ENCODE measurements at regions of chr7 and their contacts with region 1.

Region 1: DNA sequence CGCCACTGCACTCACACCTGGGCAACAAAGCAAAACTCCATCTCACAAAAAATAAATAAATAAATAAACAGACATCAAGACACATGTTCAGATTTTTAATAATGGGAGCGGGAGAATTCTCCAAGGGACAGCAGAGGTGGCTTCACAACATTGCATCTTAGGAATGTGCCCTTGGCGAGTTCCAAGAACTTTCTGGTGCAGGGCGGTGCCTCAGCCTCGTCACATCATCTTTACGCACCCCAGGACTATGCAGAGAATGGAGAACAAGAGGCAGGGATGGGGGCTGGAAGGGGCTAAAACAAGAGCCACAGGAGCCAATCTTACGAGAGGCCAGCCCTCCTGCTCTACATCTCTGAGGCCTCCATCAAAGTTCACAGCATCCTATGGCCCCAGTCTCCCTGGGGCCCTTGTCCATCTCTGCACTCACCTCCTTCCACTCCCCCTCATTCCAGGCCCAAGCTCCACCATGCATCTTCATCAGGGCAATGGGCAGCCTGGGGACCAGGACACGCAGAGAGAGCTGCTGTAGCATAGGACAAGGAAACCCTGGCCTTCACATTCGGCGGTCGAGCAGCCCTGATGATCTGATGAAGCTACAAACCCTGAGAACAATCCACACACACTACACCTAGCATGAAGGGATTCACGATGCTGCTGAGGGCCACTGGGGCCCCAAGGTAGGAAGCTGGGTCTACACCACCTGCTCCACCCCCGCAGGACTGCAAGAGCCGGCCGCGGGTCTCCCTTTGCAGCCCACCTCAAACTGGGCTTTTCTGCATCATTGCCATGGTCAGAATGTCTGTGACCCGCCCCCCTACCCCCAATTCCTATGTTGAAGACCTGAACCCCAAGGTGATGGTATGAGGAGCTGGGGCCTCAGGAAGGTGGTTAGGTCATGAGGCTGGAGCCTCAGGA is 22.3 kb downstream of the TNS3 start:
- DNase-seq: no peak
- H3K4me3 ChIP-seq: no peak overlapping the region
- H3K27ac ChIP-seq: no peak overlapping the region
- H3K4me1 ChIP-seq: no peaks in the 10 kb centered on the region
- CTCF ChIP-seq: no peak

Region 2: DNA sequence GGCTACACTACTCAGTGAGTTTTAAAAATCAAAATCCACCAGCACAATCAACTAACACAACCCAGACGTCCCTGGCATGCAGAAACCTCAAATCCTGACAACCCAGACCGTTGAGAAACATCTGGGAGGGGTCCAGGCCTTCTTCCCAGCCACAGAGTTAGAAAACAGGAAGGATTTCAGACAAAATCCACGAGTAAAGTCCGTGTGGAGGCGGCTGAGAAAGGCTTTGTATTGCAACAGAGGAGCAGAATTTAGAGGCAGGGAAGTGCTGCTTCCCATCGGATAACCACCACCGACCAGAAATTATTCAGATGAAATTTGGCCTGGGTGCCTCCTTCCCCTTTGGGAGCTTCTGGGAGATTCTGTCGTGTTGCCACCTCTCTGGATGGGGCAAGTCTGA is 39.2 kb before region 1 on chr7:
- CTCF ChIA-PET with region 1: interaction called, 17 read pairs
- POLR2A ChIA-PET with region 1: no interaction called
- intact Hi-C with region 1: no loop called
- DNase-seq: no peak
- H3K4me3 ChIP-seq: no peak overlapping the region
- H3K27ac ChIP-seq: no peak overlapping the region
- H3K4me1 ChIP-seq: no peaks in the 10 kb centered on the region
- CTCF ChIP-seq: no peak